HepG2 (cell line): ENCODE measurements at regions of chr2 and their contacts with region 1.

Region 1: DNA sequence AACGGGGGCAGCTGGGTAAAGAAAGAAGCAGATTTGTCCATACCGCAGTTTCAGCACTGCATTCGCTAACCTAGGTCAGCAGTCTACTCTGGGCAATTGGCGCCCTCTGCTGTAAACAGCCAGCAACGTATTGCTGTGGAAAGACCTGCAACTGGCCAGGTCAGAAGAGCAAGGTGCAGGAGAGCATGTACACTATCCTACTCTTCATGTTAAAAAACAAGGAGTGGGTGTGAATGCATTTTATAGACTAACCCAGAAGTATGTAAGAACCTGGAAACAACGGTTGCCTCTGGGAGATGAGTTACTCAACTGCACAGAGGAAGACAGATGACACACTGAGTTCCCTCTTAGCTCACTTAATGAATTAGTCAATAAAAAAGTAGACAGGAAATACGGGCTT is 6.2 kb downstream of the MRPS5 start:
- DNase-seq: peak; percentile 80
- ATAC-seq: peak; percentile 100
- H3K4me3 ChIP-seq: no peak overlapping the region
- H3K27ac ChIP-seq: no peak overlapping the region
- H3K4me1 ChIP-seq: peaks cover 36% of the 10 kb centered on the region
- H3K27me3 ChIP-seq: no peaks in the 10 kb centered on the region
- CTCF ChIP-seq: peak; percentile 97
- EP300 ChIP-seq: no peak
- POLR2A ChIP-seq: no peak
- RAD21 ChIP-seq: peak; percentile 81

Region 2: DNA sequence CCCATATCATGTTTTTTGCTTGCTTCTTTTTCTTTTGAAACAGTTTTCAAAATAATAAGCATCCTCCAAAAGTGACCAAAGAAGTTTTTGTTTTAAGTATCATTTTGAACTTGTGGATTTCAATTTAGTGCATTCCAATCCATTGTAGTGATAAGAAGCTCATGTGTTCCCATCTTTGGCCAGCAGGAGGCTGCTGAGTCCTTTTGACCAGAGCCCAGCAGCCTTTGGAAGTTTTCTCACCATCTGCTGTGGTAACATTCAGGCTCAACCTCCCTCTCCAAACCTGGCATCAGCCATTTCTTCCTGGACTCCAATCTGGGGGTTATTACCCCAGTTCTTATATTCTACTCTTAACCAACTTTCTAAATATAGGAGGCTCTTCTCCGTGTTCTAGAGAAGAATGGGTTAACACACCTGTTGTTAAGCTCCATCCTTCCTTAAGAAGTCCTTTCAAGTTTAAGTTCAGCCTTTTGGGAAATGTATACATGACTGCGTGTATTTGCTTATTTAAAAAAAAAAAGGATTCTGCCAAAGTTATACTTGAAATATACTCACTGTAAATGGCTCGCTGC is 128.9 kb before region 1 on chr2:
- CTCF ChIA-PET with region 1: interaction called, 11 read pairs
- POLR2A ChIA-PET with region 1: no interaction called
- in situ Hi-C with region 1: no loop called
- intact Hi-C with region 1: loop called (anchors 1 kb)
- DNase-seq: peak; percentile 62
- ATAC-seq: peak; percentile 90
- H3K4me3 ChIP-seq: no peak overlapping the region
- H3K27ac ChIP-seq: no peak overlapping the region
- H3K4me1 ChIP-seq: no peaks in the 10 kb centered on the region
- H3K27me3 ChIP-seq: peaks cover 4 to 27% of the 10 kb centered on the region in 2 experiments; a peak in 4 of 5 replicates
- CTCF ChIP-seq: peak; percentile 71
- EP300 ChIP-seq: no peak
- POLR2A ChIP-seq: no peak
- RAD21 ChIP-seq: no peak

Region 3: DNA sequence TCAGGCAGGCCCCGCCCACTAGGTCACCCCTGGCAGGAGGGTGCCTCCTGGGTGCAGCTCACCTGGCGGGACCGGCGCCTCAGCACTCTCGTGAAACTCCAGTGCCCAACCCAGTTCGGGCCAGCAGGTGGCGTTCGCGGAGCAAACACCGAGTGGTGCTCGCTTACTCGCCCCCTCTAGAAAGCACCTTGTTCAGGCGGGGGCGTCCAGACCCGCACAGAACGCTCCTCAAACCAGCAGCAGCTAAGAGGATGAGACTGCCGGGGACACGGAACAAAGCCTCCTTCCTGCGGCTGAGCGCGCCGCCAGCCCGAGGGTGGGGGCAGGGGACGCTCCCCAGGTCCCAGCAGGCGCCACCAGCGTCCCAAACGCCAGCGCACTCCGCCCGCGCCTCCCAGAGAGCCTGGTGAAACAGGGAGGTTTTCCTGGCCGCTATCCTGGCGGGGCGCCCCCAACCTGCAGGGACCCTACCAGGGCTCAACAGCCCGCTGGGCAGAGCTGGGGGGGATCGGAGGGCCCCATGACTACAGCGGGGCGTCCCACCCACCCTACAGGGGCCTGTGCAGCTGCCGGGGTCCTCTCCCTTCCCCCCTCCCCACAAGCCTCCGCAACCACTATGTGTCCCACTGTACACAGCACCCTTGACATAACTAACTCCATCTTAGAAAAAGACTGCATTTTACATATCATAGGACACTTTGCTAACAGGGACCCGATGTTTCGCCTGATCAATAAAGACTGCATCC is 38.5 kb before region 1 on chr2:
- CTCF ChIA-PET with region 1: interaction called, 12 read pairs
- POLR2A ChIA-PET with region 1: no interaction called
- in situ Hi-C with region 1: no loop called
- intact Hi-C with region 1: loop called (anchors 1 kb)
- DNase-seq: peak; percentile 70
- ATAC-seq: peak; percentile 92
- H3K4me3 ChIP-seq: peak overlapping the region; percentile 54 to 78 (median 60)
- H3K27ac ChIP-seq: no peak overlapping the region
- H3K4me1 ChIP-seq: peaks cover 37% of the 10 kb centered on the region
- H3K27me3 ChIP-seq: peaks cover 5 to 57% of the 10 kb centered on the region in 2 experiments; a peak in 4 of 5 replicates
- CTCF ChIP-seq: peak; percentile 98
- EP300 ChIP-seq: no peak
- POLR2A ChIP-seq: no peak
- RAD21 ChIP-seq: peak; percentile 73